Heart left ventricle (tissue), 16 donors: ENCODE measurements at regions of chr2 and their contacts with region 1.

Region 1: GRCh38 chr2:169109502-169110409 is 40.4 kb downstream of the DHRS9 start:
- DNase-seq: peak; percentile 63 to 81 (median 73)
- ATAC-seq: peak; percentile 75 to 92 (median 84)
- H3K4me3 ChIP-seq: no peak overlapping the region
- H3K27ac ChIP-seq: no peak overlapping the region
- H3K4me1 ChIP-seq: peaks cover 0 to 49% (median 0%) of the 10 kb centered on the region in 12 donors
- H3K27me3 ChIP-seq: no peaks in the 10 kb centered on the region
- CTCF ChIP-seq: peak; percentile 67 to 90 (median 80)
- POLR2A ChIP-seq: no peak

Region 2: GRCh38 chr2:168835969-168836368 is 273.8 kb before region 1 on chr2:
- intact Hi-C with region 1: no loop called
- DNase-seq: no peak
- ATAC-seq: no peak
- H3K4me3 ChIP-seq: no peak overlapping the region
- H3K27ac ChIP-seq: no peak overlapping the region
- H3K4me1 ChIP-seq: no peaks in the 10 kb centered on the region
- H3K27me3 ChIP-seq: no peaks in the 10 kb centered on the region
- CTCF ChIP-seq: no peak
- POLR2A ChIP-seq: no peak

Region 3: GRCh38 chr2:169050478-169051240 is 59.1 kb before region 1 on chr2:
- intact Hi-C with region 1: no loop called
- DNase-seq: no peak
- ATAC-seq: no peak
- H3K4me3 ChIP-seq: no peak overlapping the region
- H3K27ac ChIP-seq: no peak overlapping the region
- H3K4me1 ChIP-seq: no peaks in the 10 kb centered on the region
- H3K27me3 ChIP-seq: no peaks in the 10 kb centered on the region
- CTCF ChIP-seq: no peak
- POLR2A ChIP-seq: no peak

Region 4: DNA sequence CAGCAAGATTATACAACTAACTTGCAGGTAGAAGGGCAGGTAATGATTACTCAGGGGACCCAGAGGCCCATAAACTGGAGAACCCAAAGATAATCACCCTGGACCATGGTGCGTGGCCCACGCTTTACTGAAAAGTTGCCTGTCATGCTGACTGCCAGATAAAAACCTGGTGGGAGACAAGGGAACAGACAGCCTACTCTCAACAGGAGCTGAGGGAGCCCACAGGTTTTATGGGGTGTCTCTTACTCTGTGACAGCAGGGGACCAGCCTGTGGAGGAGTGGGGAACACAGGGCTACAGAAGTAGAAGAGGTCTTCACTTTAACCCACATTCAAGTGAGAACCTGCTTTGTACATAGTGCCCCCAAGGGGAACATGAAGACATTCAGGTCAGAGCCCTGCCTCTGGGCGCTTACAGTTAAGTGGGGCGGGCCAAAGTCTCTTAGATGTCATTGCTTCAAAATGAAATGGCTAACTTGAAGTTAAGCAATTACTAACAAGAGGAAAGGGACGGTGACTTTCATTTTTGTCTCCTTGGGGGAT is 20.0 kb after region 1 on chr2:
- intact Hi-C with region 1: no loop called
- DNase-seq: no peak
- ATAC-seq: no peak
- H3K4me3 ChIP-seq: no peak overlapping the region
- H3K27ac ChIP-seq: no peak overlapping the region
- H3K4me1 ChIP-seq: peaks cover 0 to 7% (median 0%) of the 10 kb centered on the region in 12 donors
- H3K27me3 ChIP-seq: no peaks in the 10 kb centered on the region
- CTCF ChIP-seq: no peak
- POLR2A ChIP-seq: no peak

Region 5: GRCh38 chr2:169141713-169142352 is 32.1 kb after region 1 on chr2:
- intact Hi-C with region 1: loop called in 5 of 10 experiments (anchors 1 to 5 kb)
- DNase-seq: peak in 4 of 5 donors; percentile 30 to 41 (median 34)
- ATAC-seq: peak in 3 of 4 donors; percentile 32 to 49 (median 38)
- H3K4me3 ChIP-seq: no peak overlapping the region
- H3K27ac ChIP-seq: no peak overlapping the region
- H3K4me1 ChIP-seq: peaks cover 0 to 8% (median 0%) of the 10 kb centered on the region in 12 donors
- H3K27me3 ChIP-seq: no peaks in the 10 kb centered on the region
- CTCF ChIP-seq: peak; percentile 54 to 84 (median 68)
- POLR2A ChIP-seq: no peak

Region 6: GRCh38 chr2:169221745-169222369 is 112.1 kb after region 1 on chr2:
- intact Hi-C with region 1: loop called in 6 of 10 experiments (anchors 2 to 5 kb)
- DNase-seq: no peak
- ATAC-seq: no peak
- H3K4me3 ChIP-seq: no peak overlapping the region
- H3K27ac ChIP-seq: no peak overlapping the region
- H3K4me1 ChIP-seq: no peaks in the 10 kb centered on the region
- H3K27me3 ChIP-seq: no peaks in the 10 kb centered on the region
- CTCF ChIP-seq: peak in 8 of 12 donors; percentile 20 to 50 (median 34)
- POLR2A ChIP-seq: no peak

Region 7: DNA sequence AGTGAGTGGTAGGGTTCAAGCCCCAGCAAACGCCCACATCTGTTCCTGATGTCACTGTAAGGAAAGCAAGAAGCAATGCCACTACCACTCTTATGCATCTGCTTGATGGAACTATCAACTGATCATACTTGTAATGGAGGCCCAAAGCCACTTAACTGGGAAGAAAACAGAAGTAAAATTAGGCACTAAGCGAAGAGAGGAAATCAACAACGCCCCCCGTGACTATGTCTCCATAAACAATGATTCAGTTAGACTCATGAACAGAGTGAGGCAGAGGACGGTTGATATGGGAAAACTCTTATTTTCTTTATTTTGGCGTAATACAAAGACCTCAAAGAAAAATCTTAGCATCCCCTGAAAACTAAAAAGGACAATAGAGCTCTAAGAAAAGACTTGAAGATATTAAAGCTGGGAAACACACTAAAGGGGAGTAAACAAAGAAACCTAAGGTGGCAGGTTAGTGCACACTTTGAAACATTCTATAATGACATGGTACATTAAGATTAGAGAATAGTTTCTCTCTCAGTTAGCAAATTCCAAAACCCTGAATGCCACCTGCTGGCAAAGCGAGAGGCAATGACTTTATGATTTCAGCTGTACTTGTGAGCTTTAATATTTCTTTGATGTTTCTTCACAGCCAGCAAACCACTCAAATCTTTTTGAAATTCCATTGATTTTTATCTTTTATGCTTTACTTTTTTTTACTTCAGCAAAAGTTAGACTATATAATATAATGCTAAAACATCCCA is 166.1 kb after region 1 on chr2:
- intact Hi-C with region 1: loop called in 3 of 10 experiments (anchors 5 to 10 kb)
- DNase-seq: no peak
- ATAC-seq: no peak
- H3K4me3 ChIP-seq: no peak overlapping the region
- H3K27ac ChIP-seq: no peak overlapping the region
- H3K4me1 ChIP-seq: no peaks in the 10 kb centered on the region
- H3K27me3 ChIP-seq: no peaks in the 10 kb centered on the region
- CTCF ChIP-seq: peak in 6 of 12 donors; percentile 5 to 36 (median 19)
- POLR2A ChIP-seq: no peak

Region 8: DNA sequence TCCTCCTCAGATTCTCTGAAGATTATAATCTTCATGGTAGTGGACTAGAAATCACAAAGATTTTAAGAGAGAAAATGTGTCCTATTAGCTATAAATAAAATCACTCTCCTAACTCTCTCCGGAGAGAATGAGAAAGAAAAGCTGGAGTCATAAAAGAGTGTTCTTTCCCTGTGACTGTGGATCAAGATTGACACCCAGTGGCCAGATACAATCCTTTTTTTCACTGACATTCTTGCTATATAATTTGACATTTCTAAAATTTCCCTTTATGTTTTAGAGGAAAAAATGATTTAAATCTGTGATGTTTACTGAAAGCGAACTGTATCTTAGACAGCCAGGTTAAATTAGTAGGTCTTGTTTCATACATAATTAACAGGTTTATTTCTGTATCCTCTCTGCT is 287.9 kb after region 1 on chr2:
- intact Hi-C with region 1: loop called in 2 of 10 experiments (anchors 10 kb)
- DNase-seq: no peak
- ATAC-seq: no peak
- H3K4me3 ChIP-seq: no peak overlapping the region
- H3K27ac ChIP-seq: no peak overlapping the region
- H3K4me1 ChIP-seq: no peaks in the 10 kb centered on the region
- H3K27me3 ChIP-seq: peaks cover 0 to 5% (median 0%) of the 10 kb centered on the region in 9 donors
- CTCF ChIP-seq: peak in 6 of 12 donors; percentile 10 to 31 (median 25)
- POLR2A ChIP-seq: no peak